HepG2 (cell line): ENCODE measurements at regions of chr22 and their contacts with region 1.

Region 1: DNA sequence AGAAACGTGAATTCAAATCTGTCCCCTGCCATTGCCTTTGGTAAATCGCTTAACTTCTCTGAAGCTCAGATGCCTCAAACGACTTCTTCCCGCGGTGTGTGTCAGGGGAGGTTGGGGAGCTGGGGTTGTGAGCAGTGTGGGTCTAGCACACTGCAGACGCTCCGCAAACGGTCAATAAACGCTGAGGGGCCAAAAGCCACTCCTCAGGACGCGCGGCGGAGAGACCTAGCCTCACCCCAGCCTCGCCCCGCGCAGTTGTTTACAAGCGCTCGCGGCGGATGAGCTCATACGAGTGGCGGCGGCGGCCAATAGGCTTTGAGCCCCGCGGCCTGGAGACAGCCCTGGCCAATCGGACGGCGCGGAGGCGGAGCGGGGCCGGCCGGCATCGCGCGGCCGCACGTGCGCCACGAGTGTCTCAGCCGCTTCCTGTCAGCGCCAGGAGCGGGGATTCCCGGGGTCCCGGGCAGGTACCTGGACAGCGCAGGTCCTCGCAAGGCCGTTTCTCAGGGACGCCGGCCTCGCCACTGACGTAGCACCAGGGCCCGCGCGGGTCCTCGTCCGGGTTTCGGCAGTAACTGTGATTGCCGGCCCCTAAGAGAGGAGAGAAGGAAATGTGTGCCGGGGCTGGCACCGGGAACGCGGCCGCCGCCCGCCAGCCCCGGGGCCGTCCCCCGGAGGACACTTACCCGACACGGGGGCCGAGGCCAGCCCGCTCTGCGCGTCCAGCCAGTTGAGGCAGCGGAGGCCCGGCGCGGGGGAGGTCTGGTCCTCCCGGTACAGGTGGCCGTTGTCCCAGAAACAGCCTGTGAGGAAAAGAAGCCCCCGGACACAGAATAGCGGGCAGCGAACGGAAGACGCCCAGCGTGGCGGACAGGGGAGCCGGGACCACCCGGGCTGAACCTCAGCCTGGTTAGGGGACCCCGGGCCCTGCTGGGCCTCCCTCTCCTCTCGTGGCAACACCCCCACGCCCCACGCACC is 1.5 kb downstream of the PIK3IP1 start:
- DNase-seq: peak; percentile 78
- ATAC-seq: peak; percentile 95
- H3K4me3 ChIP-seq: peak overlapping the region; percentile 46 to 78 (median 51)
- H3K27ac ChIP-seq: no peak overlapping the region
- H3K4me1 ChIP-seq: peaks cover 37% of the 10 kb centered on the region
- H3K27me3 ChIP-seq: no peaks in the 10 kb centered on the region
- CTCF ChIP-seq: no peak
- EP300 ChIP-seq: peak in 1 of 2 experiments; percentile 71; a peak in 2 of 4 replicates
- POLR2A ChIP-seq: peak; percentile 13 to 28; a peak in 1 of 4 replicates
- RAD21 ChIP-seq: no peak

Region 2: GRCh38 chr22:31230871-31231621 is 59.7 kb before region 1 on chr22:
- CTCF ChIA-PET with region 1: no interaction called
- POLR2A ChIA-PET with region 1: no interaction called
- in situ Hi-C with region 1: no loop called
- intact Hi-C with region 1: no loop called
- DNase-seq: peak; percentile 83
- ATAC-seq: peak; percentile 93
- H3K4me3 ChIP-seq: no peak overlapping the region
- H3K27ac ChIP-seq: peak overlapping the region; percentile 61
- H3K4me1 ChIP-seq: peaks cover 56% of the 10 kb centered on the region
- H3K27me3 ChIP-seq: no peaks in the 10 kb centered on the region
- CTCF ChIP-seq: peak; percentile 96
- EP300 ChIP-seq: peak in 1 of 2 experiments; percentile 37; a peak in 1 of 4 replicates
- POLR2A ChIP-seq: no peak
- RAD21 ChIP-seq: peak; percentile 97

Region 3: GRCh38 chr22:31302006-31302405 is 11.2 kb after region 1 on chr22:
- CTCF ChIA-PET with region 1: no interaction called
- POLR2A ChIA-PET with region 1: interaction called, 10 read pairs
- in situ Hi-C with region 1: no loop called
- intact Hi-C with region 1: no loop called
- DNase-seq: no peak
- ATAC-seq: no peak
- H3K4me3 ChIP-seq: no peak overlapping the region
- H3K27ac ChIP-seq: no peak overlapping the region
- H3K4me1 ChIP-seq: peaks cover 25% of the 10 kb centered on the region
- H3K27me3 ChIP-seq: no peaks in the 10 kb centered on the region
- CTCF ChIP-seq: no peak
- EP300 ChIP-seq: no peak
- POLR2A ChIP-seq: no peak
- RAD21 ChIP-seq: no peak

Region 4: GRCh38 chr22:31313366-31314147 is 22.8 kb after region 1 on chr22:
- CTCF ChIA-PET with region 1: interaction called, 3 read pairs
- POLR2A ChIA-PET with region 1: interaction called, 3 read pairs
- in situ Hi-C with region 1: no loop called
- intact Hi-C with region 1: loop called (anchors 1 kb)
- DNase-seq: peak; percentile 46
- ATAC-seq: peak; percentile 95
- H3K4me3 ChIP-seq: 0 out of 6 replicates have a peak overlapping the region, but pooled peaks of 1 of the 3 experiments have one; percentile 21
- H3K27ac ChIP-seq: no peak overlapping the region
- H3K4me1 ChIP-seq: peaks cover 9% of the 10 kb centered on the region; the same call in 1 of the 2 replicates
- H3K27me3 ChIP-seq: no peaks in the 10 kb centered on the region
- CTCF ChIP-seq: peak; percentile 78
- EP300 ChIP-seq: no peak
- POLR2A ChIP-seq: no peak
- RAD21 ChIP-seq: peak; percentile 28; the same call in 1 of the 2 replicates

Region 5: DNA sequence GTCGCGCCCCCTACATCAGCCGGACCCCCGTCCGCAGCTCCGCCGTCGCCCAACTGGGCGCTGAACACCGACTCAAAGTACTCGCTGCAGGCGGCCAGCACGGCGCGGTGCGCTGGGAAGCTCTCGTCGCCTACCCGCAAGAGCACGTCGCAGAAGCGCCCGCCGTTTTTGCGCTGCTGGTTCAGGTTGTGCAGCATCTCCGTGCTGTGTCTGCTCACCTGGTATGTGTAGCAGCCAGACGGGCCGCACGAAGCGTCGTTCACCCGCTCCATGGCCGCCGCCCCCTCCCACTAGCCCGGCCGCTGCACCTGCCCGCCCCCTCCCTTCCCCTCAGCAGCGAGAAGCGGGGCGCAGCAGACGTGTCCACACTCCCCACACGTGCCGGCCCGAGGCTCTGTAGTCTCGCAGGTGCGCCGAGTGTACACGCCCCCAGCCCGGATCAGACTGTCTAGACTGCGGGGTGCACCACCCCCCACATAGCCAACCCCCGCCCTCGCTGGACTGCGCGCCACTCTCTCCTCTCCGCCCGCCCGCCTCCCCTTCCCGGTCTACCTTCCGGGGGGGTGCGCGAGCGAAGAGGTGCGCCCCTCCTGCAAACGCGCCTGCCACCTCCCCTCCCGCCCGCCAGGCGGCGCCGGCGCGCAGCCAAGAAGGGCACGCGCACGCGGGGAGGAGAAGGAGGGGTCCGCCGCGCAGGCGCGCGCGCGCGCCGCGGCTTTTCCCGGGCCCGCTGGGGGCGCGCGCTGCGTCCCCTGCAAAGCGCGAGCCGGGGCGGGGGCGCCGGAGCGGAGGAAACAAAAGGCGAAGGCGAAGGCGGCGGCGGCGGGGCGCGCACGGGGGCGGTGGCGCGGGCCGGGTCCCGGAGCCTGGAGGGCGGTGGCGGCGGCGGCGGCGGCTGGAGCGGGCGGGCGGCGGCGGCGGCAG is 54.8 kb after region 1 on chr22:
- CTCF ChIA-PET with region 1: no interaction called
- POLR2A ChIA-PET with region 1: interaction called, 21 read pairs
- in situ Hi-C with region 1: no loop called
- intact Hi-C with region 1: no loop called
- DNase-seq: peak; percentile 70
- ATAC-seq: peak; percentile 3
- H3K4me3 ChIP-seq: peak overlapping the region; percentile 64 to 91 (median 85); a peak in 5 of 6 replicates
- H3K27ac ChIP-seq: peak overlapping the region; percentile 94
- H3K4me1 ChIP-seq: peaks cover 74% of the 10 kb centered on the region
- H3K27me3 ChIP-seq: no peaks in the 10 kb centered on the region; a peak in 1 of 5 replicates
- CTCF ChIP-seq: peak; percentile 89
- EP300 ChIP-seq: no peak
- POLR2A ChIP-seq: no peak
- RAD21 ChIP-seq: peak; percentile 91